Motor neuron (in vitro differentiated cells): ENCODE measurements at regions of chr12 and their contacts with region 1.

Region 1: DNA sequence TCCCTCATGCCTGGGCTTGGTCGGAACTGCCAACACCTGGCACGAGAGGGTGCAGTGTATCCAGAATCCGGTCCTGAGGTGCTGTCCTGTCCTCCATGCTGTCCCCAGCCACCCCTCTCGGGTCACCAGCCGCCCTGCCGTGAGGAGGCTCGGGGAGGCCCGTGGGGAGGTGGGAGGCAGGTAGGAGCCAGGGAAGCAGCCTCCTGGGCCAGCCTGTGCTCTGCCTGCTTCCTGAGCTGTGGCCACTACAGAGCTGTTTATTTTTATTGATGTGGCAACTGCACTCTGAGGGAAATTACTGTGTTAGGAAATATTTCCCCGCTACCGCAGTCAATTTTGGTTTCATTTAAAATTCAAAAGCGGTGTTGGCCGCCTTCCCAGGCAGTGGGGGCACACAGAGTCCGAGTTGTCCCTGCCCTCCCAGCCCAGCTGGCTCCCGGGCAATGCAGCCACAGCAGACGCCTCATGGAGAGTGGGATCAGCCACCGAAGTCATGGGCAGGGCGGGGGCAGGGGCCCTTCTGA is 18.3 kb downstream of the NOC4L start:
- ATAC-seq: peak; percentile 15 to 90 (median 42)
- H3K4me3 ChIP-seq: no peak overlapping the region
- H3K27ac ChIP-seq: no peak overlapping the region
- H3K4me1 ChIP-seq: no peaks in the 10 kb centered on the region

Region 2: GRCh38 chr12:131222256-131223139 is 940.1 kb before region 1 on chr12:
- in situ Hi-C with region 1: no loop called
- ATAC-seq: peak in 6 of 8 experiments; percentile 1 to 75 (median 32)
- H3K4me3 ChIP-seq: no peak overlapping the region
- H3K27ac ChIP-seq: no peak overlapping the region
- H3K4me1 ChIP-seq: peaks cover 43 to 47% of the 10 kb centered on the region in 2 donors

Region 3: DNA sequence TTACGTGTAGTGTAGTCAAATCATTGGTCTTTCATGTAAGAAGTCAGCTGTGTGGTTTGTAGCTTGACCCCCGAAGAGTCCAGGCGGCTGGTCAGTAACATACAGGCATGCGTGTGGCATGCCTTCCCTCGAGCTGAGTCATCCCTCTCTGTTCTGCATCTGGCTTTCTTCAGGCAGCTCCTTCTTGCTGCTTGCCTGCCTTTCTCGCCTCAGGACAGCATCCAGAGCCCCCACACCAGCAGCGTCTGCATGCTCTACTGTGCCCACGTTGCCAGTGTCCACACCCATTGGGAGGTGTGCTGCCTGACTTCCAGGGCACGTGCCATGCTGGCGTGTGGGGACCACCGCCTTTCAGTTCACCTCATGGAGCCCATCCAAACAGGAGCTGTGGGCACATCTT is 116.0 kb before region 1 on chr12:
- in situ Hi-C with region 1: no loop called
- ATAC-seq: peak in 4 of 8 experiments; percentile 10 to 99 (median 64)
- H3K4me3 ChIP-seq: no peak overlapping the region
- H3K27ac ChIP-seq: no peak overlapping the region
- H3K4me1 ChIP-seq: no peaks in the 10 kb centered on the region

Region 4: GRCh38 chr12:132400011-132400641 is 237.6 kb after region 1 on chr12:
- in situ Hi-C with region 1: loop called in 2 of 9 experiments (anchors 10 to 25 kb)
- ATAC-seq: peak; percentile 31 to 72 (median 68)
- H3K4me3 ChIP-seq: no peak overlapping the region
- H3K27ac ChIP-seq: no peak overlapping the region
- H3K4me1 ChIP-seq: peaks cover 6 to 19% of the 10 kb centered on the region in 2 donors

Region 5: DNA sequence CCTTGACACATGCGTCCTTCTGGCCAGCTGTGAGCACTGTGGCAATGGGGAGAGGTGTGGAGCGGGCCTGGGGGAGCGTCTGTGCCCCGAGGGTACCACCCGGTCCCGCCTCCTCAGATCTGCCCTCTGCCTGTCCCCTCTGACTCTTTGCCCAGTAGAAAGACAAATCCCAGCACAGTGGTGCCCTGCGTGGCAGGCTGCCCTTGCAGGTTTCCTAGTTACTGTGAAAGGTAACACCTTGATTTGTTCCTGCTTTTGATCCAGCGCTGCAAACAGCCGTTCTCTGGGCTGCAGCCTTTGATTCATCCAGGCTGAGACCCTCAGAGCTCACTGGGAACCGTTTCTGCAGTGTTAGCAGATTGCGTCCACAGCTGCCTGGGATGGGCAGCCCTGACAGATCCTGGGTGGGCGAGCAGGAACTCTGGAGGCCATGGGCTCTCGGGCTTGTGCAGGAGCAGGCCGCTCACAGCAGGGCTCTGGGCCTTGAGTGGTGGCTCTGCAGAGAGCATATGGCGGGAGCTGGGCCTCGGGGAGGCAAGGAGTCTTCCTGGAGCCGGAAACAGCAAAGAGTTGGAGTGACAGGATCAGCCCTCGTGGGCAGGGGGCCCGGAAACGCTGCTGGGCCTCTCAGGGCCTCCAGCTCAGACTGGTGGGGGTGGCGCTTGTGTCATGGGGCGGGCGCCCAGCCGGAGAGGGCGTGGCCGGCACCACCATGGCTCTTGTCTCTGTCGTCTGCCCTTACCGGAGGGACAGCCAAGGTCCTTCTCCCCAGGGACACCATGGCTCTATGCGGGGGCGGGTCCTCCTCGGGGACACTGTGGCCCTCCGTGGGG is 344.0 kb after region 1 on chr12:
- in situ Hi-C with region 1: no loop called
- ATAC-seq: peak; percentile 68 to 92 (median 88)
- H3K4me3 ChIP-seq: peak overlapping the region in 1 of 5 donors; percentile 11
- H3K27ac ChIP-seq: peak overlapping the region; percentile 67 to 74
- H3K4me1 ChIP-seq: peaks cover 51 to 60% of the 10 kb centered on the region in 2 donors